Dendritic cell treated with granulocyte-macrophage colony-stimulating factor and Interleukin-4, amounts not matched to agents 40 ng/mL and 50 ng/mL, for 4 days (primary cell): ENCODE measurements at regions of chr1 and their contacts with region 1.

Region 1: GRCh38 chr1:153566440-153567379 is 1.1 kb upstream of the S100A2 start:
- H3K4me3 Mint-ChIP-seq: peak overlapping the region; percentile 42
- H3K27ac Mint-ChIP-seq: peak overlapping the region; percentile 96
- H3K4me1 Mint-ChIP-seq: peaks cover 64% of the 10 kb centered on the region
- H3K27me3 Mint-ChIP-seq: peaks cover 5% of the 10 kb centered on the region

Region 2: DNA sequence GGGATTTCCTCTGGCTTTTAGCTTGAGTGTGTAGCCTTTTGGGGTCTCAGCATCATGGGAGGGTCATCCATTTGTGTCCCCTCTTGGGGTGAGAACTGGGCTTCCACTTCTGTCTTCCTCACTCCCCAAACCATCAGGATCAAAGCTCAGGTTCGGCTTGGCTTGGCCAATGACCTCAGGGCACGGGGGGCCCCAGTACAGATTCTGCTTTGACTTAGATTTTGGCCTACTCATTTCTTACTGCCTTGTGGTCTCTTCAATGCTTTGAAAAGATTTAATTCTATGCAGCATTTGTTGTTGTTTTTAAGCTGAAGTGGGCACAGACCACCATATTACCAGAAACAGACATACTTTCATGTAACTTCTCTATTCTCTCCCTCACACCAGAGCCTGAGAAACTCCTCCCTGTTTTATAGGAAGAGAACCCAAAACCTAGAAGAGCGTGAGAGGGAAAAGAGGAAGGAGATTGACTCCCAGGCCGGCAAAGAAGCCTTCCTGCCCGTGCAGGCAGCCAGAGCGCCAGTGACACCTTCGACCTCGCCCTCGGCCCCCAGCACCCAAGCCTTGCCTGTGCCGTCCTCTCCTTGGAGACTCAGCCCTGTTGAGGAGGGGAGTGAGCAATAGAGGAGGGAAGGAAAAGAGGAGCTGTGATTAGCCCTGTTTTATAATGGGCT is 15.7 kb before region 1 on chr1:
- intact Hi-C with region 1: loop called (anchors 2 kb)
- H3K4me3 Mint-ChIP-seq: peak overlapping the region; percentile 7
- H3K27ac Mint-ChIP-seq: peak overlapping the region; percentile 94
- H3K4me1 Mint-ChIP-seq: peaks cover 89% of the 10 kb centered on the region
- H3K27me3 Mint-ChIP-seq: no peaks in the 10 kb centered on the region

Region 3: DNA sequence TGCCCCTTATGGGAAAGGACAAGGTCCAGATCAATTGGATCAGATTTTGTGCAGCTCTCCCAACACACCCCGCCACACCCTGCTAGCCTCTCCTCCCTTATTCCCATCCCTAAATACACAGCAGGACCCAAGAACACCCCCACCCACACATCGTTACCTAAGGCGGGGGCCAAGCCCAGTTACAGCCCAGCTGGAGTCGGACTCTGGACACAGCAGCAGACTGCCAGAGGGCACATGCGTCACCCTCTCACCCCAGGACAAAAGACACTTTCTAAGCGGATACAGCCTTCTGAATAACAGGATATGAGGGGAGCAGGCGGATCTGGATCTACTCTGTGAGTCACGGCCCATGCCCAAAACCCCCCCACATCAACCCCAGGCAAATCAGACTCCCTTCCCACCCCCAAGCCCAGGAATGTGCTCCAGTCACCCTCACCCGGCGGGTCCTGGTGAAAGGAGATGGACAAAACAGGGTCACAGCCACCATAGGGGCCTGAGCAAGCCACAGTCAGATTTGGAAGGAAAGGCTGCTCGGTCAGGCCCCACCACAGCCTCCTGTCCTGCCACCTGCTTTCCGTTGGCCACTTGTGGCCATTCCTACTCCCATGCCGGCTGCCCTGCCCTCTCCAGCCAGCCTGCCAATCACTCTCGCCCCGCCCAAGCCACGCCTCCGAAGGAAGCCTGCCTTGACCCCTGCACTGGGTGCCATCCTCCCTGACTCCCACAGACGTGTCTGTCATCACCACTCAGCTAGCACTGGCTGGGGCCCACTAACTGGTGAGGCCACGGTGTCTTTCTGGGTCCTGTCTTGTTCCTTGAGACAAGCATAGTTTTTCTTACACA is 42.3 kb after region 1 on chr1:
- intact Hi-C with region 1: no loop called
- H3K4me3 Mint-ChIP-seq: no peak overlapping the region
- H3K27ac Mint-ChIP-seq: peak overlapping the region; percentile 2
- H3K4me1 Mint-ChIP-seq: peaks cover 42% of the 10 kb centered on the region
- H3K27me3 Mint-ChIP-seq: peaks cover 1% of the 10 kb centered on the region